KBM-7 (cell line): ENCODE measurements at regions of chr11 and their contacts with region 1.

Region 1: DNA sequence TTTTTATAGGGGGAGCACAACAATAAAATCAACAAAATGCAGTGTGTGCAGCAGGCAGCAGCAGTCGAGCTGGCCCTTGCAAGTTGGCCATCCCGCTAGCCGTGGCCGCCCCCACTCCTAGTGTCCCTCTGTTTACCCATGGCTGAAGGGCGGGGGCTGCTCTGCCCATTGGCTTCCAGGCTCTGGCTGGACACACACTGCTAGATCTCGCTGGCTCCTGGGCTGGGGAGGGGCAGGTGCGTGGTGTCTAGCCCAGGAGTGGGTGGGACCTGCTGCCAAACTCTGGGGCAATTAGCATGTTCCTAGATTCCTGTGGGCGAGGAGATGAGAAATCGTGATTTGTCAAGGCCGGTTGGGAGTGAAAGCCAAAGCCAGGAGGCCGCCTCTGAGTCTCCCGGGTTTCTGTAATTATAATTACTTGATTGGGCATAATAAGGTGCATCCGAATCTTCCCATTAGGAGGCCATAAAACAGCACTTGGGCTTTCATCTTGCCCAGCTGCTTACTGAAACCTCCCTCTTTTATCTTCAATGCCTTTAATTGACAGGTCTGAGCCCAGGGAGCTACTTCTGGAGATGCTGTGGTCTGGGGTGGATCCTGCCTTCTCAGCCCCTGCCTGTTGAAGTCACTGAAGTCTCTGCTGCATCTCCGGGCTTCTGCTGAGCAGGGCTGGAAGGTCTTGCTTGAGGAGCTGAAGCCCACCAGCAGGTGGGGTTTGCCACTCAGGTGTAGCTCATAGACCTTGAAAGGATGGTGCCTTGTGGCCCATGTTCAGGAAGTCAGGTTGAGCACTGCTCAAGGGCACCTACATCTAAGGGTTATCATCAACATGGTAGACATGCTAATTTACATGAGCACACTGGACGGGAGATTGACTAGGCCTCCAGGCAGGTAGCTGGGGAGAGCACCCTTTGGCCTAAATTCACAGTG is 44.5 kb upstream of the DKK3 start:
- DNase-seq: no peak

Region 2: GRCh38 chr11:12248338-12248737 is 195.4 kb after region 1 on chr11:
- in situ Hi-C with region 1: loop called (anchors 10 kb)
- DNase-seq: no peak

Region 3: GRCh38 chr11:12449961-12450715 is 397.2 kb after region 1 on chr11:
- in situ Hi-C with region 1: no loop called
- DNase-seq: no peak